ENCODE measurements at regions of chr19 and their contacts with region 1.

Region 1: GRCh38 chr19:16771618-16772017 is 52.0 kb downstream of the NWD1 start:
- DNase-seq: peak in 3 of 4 donors; percentile 64 to 83 (median 72)
- ATAC-seq: peak; percentile 97
- H3K4me3 ChIP-seq: no peak overlapping the region
- H3K27ac ChIP-seq: no peak overlapping the region
- H3K4me1 ChIP-seq: no peaks in the 10 kb centered on the region
- H3K27me3 ChIP-seq: no peaks in the 10 kb centered on the region
- CTCF ChIP-seq: peak; percentile 88 to 90

Region 2: GRCh38 chr19:16649734-16650133 is 121.9 kb before region 1 on chr19:
- intact Hi-C with region 1: no loop called
- DNase-seq: no peak
- ATAC-seq: peak; percentile 24
- H3K4me3 ChIP-seq: no peak overlapping the region
- H3K27ac ChIP-seq: peak overlapping the region in 1 of 2 donors; percentile 30
- H3K4me1 ChIP-seq: peaks cover 0 to 17% of the 10 kb centered on the region in 2 donors
- H3K27me3 ChIP-seq: no peaks in the 10 kb centered on the region
- CTCF ChIP-seq: no peak

Region 3: GRCh38 chr19:16969127-16969526 is 197.5 kb after region 1 on chr19:
- intact Hi-C with region 1: no loop called
- DNase-seq: no peak
- ATAC-seq: peak; percentile 37
- H3K4me3 ChIP-seq: no peak overlapping the region
- H3K27ac ChIP-seq: no peak overlapping the region
- H3K4me1 ChIP-seq: no peaks in the 10 kb centered on the region
- H3K27me3 ChIP-seq: no peaks in the 10 kb centered on the region
- CTCF ChIP-seq: no peak

Region 4: GRCh38 chr19:17052439-17053210 is 281.0 kb after region 1 on chr19:
- intact Hi-C with region 1: loop called in 1 of 2 experiments (anchors 5 kb)
- DNase-seq: peak in 2 of 4 donors; percentile 41 to 73
- ATAC-seq: peak; percentile 78
- H3K4me3 ChIP-seq: no peak overlapping the region
- H3K27ac ChIP-seq: no peak overlapping the region
- H3K4me1 ChIP-seq: no peaks in the 10 kb centered on the region
- H3K27me3 ChIP-seq: no peaks in the 10 kb centered on the region
- CTCF ChIP-seq: peak; percentile 48 to 65

Measured in left lung (tissue), 14 donors.